HCT116 (cell line): ENCODE measurements at regions of chr22 and their contacts with region 1.

Region 1: GRCh38 chr22:38051900-38052862 is 5.0 kb upstream of the PICK1 start:
- DNase-seq: peak; percentile 63
- ATAC-seq: peak; percentile 81
- H3K4me3 ChIP-seq: no peak overlapping the region
- H3K27ac ChIP-seq: no peak overlapping the region; the same call in 1 of the 2 replicates
- H3K4me1 ChIP-seq: peaks cover 0 to 10% of the 10 kb centered on the region in 2 experiments; a peak in 2 of 4 replicates
- H3K27me3 ChIP-seq: no peaks in the 10 kb centered on the region
- CTCF ChIP-seq: peak; percentile 79 to 99 (median 94)
- POLR2A ChIP-seq: no peak
- RAD21 ChIP-seq: peak; percentile 99

Region 2: GRCh38 chr22:37623075-37624016 is 428.8 kb before region 1 on chr22:
- CTCF ChIA-PET with region 1: no interaction called
- POLR2A ChIA-PET with region 1: no interaction called
- RAD21 ChIA-PET with region 1: no interaction called
- intact Hi-C with region 1: no loop called
- DNase-seq: no peak
- ATAC-seq: peak; percentile 86
- H3K4me3 ChIP-seq: no peak overlapping the region
- H3K27ac ChIP-seq: peak overlapping the region; percentile 8; the same call in 1 of the 2 replicates
- H3K4me1 ChIP-seq: no peaks in the 10 kb centered on the region; a peak in 1 of 4 replicates
- H3K27me3 ChIP-seq: no peaks in the 10 kb centered on the region
- CTCF ChIP-seq: peak; percentile 64 to 92 (median 86); a peak in 5 of 6 replicates
- POLR2A ChIP-seq: no peak
- RAD21 ChIP-seq: peak; percentile 71

Region 3: GRCh38 chr22:38097557-38098409 is 45.6 kb after region 1 on chr22:
- CTCF ChIA-PET with region 1: interaction called, 37 read pairs
- POLR2A ChIA-PET with region 1: no interaction called
- RAD21 ChIA-PET with region 1: interaction called, 3 to 4 read pairs
- intact Hi-C with region 1: loop called (anchors 5 kb)
- DNase-seq: peak; percentile 15
- ATAC-seq: peak; percentile 91
- H3K4me3 ChIP-seq: no peak overlapping the region
- H3K27ac ChIP-seq: no peak overlapping the region
- H3K4me1 ChIP-seq: peaks cover 3 to 11% of the 10 kb centered on the region in 2 experiments; a peak in 2 of 4 replicates
- H3K27me3 ChIP-seq: no peaks in the 10 kb centered on the region
- CTCF ChIP-seq: peak; percentile 47 to 78 (median 68); a peak in 5 of 6 replicates
- POLR2A ChIP-seq: no peak
- RAD21 ChIP-seq: peak; percentile 65

Region 4: DNA sequence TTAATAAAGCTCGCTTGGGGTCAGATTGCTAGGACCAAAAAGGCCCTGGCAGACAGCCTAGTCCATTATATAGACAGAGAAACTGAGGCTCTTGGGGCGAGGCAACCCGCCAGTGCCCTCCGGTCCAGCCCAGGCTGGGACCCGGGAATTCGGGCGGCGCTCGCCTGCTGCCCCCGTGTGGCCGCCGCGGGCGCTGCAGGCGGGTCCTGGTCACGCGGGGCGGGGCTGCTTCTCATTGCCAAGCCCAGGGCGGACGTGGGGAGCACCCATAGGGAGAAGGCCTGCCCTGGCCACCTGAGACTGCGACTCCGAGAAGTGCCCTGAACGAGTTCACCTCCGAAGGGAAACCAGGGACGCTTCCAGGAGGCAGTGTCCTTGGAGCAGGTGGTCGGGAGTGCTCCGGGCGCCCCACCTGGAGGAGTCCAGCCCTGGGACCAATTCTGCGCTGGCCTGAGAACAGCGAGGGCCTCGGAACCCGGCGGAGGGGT is 301.0 kb after region 1 on chr22:
- CTCF ChIA-PET with region 1: no interaction called
- POLR2A ChIA-PET with region 1: no interaction called
- RAD21 ChIA-PET with region 1: no interaction called
- intact Hi-C with region 1: loop called (anchors 1 kb)
- DNase-seq: peak; percentile 8
- ATAC-seq: peak; percentile 90
- H3K4me3 ChIP-seq: no peak overlapping the region
- H3K27ac ChIP-seq: no peak overlapping the region
- H3K4me1 ChIP-seq: peaks cover 0 to 6% of the 10 kb centered on the region in 2 experiments; a peak in 1 of 4 replicates
- H3K27me3 ChIP-seq: no peaks in the 10 kb centered on the region
- CTCF ChIP-seq: peak; percentile 81 to 96 (median 94)
- POLR2A ChIP-seq: no peak
- RAD21 ChIP-seq: peak; percentile 90

Region 5: DNA sequence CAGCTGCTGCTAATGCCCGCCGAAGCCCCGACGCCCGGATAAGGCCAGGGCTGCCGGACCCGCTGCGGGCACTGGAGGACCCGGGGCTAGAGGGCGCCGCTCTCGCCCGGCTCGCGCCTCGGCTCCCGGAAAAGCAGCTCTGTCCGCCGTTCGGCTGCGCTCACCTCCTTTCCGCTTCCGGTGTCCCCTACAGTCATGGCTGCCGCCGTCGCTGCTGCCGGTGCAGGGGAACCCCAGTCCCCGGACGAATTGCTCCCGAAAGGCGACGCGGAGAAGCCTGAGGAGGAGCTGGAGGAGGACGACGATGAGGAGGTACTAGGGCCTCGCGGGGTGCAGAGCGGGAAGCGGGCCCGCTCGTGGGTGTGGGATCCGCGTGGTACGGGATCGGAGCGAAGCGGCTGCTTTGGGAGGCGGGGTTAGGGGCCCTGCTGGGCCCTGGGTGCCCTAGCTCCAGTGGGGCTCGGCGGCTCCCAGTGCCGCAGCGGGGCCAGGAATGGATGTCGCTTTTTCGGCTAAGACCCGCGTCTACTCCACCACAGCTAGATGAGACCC is 629.7 kb after region 1 on chr22 and contains the start of gene TOMM22:
- CTCF ChIA-PET with region 1: interaction called, 13 read pairs
- POLR2A ChIA-PET with region 1: no interaction called
- RAD21 ChIA-PET with region 1: no interaction called
- intact Hi-C with region 1: loop called (anchors 1 kb)
- DNase-seq: peak; percentile 72
- ATAC-seq: peak; percentile 98
- H3K4me3 ChIP-seq: peak within 1 kb of the TSS; percentile 75 to 98
- H3K27ac ChIP-seq: peak within 1 kb of the TSS; percentile 75
- H3K4me1 ChIP-seq: peaks cover 2 to 12% of the 10 kb centered on the region in 2 experiments; a peak in 3 of 4 replicates
- H3K27me3 ChIP-seq: no peaks in the 10 kb centered on the region
- CTCF ChIP-seq: peak; percentile 58 to 72 (median 64); a peak in 5 of 6 replicates
- POLR2A ChIP-seq: peak; percentile 77
- RAD21 ChIP-seq: peak; percentile 60
- total RNA-seq, gene TOMM22: 136 TPM

Region 6: DNA sequence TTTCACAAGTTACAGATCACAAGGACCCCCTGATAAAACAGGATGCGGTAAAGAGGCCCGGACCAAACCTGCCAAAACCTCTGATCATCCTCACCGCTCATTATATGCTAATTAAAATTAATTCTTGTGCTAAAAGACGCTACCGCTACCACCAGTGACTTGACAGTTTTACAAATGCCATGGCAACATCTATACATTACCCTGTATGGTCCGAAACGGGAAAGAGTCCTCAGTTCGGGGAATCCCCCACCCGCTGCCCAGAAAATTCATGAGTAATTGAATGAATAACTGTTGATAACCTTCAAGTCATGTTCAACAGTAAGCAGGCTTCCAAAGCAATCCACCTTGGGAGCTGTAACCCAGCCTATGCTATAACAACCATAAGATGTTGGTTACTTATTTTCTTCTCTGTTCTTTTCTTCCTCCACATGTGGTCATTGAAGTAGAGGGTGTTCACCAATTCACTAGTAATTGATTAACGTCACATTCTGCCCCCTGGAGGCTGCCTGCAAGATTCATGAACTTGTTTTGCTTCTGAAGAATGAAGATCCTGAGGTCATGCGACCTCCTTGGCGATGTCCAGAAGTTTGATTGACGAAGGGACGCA is 1065.5 kb after region 1 on chr22:
- CTCF ChIA-PET with region 1: no interaction called
- POLR2A ChIA-PET with region 1: no interaction called
- RAD21 ChIA-PET with region 1: no interaction called
- intact Hi-C with region 1: loop called (anchors 5 kb)
- DNase-seq: peak; percentile 53
- ATAC-seq: peak; percentile 76
- H3K4me3 ChIP-seq: no peak overlapping the region
- H3K27ac ChIP-seq: no peak overlapping the region
- H3K4me1 ChIP-seq: no peaks in the 10 kb centered on the region
- H3K27me3 ChIP-seq: no peaks in the 10 kb centered on the region
- CTCF ChIP-seq: peak; percentile 65 to 80 (median 75)
- POLR2A ChIP-seq: no peak
- RAD21 ChIP-seq: peak; percentile 84